HAP-1 (cell line): ENCODE measurements at regions of chr1 and their contacts with region 1.

Region 1: GRCh38 chr1:236103646-236104218 is 38.6 kb upstream of the GPR137B start:
- DNase-seq: peak; percentile 66 to 74
- H3K4me3 ChIP-seq: no peak overlapping the region
- H3K4me1 ChIP-seq: no peaks in the 10 kb centered on the region
- H3K27me3 ChIP-seq: no peaks in the 10 kb centered on the region

Region 2: DNA sequence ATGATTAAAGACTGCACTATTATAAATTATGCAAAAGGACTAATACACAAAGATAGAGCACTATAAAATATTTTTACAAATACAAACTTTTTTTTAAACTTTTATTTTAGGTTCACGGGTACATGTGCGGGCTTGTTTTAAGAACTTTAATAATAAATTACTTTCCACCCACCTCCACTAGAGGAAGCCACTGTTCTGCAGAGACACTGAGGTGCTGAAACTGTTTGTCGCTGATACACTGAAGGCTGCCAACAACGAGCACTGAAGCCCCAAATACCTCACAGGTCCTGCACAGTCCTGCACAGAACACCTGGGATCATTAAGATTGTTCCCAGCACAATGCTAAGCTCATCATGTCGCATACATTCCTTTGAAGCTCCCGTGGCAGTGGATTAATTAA is 1710.5 kb before region 1 on chr1:
- in situ Hi-C with region 1: no loop called
- DNase-seq: no peak
- H3K4me3 ChIP-seq: no peak overlapping the region
- H3K4me1 ChIP-seq: no peaks in the 10 kb centered on the region
- H3K27me3 ChIP-seq: no peaks in the 10 kb centered on the region

Region 3: GRCh38 chr1:236039740-236040685 is 63.7 kb before region 1 on chr1:
- in situ Hi-C with region 1: no loop called
- DNase-seq: no peak
- H3K4me3 ChIP-seq: no peak overlapping the region
- H3K4me1 ChIP-seq: no peaks in the 10 kb centered on the region
- H3K27me3 ChIP-seq: no peaks in the 10 kb centered on the region

Region 4: GRCh38 chr1:236534151-236534651 is 430.5 kb after region 1 on chr1:
- in situ Hi-C with region 1: loop called (anchors 10 kb)
- DNase-seq: no peak
- H3K4me3 ChIP-seq: no peak overlapping the region
- H3K4me1 ChIP-seq: no peaks in the 10 kb centered on the region
- H3K27me3 ChIP-seq: no peaks in the 10 kb centered on the region

Region 5: DNA sequence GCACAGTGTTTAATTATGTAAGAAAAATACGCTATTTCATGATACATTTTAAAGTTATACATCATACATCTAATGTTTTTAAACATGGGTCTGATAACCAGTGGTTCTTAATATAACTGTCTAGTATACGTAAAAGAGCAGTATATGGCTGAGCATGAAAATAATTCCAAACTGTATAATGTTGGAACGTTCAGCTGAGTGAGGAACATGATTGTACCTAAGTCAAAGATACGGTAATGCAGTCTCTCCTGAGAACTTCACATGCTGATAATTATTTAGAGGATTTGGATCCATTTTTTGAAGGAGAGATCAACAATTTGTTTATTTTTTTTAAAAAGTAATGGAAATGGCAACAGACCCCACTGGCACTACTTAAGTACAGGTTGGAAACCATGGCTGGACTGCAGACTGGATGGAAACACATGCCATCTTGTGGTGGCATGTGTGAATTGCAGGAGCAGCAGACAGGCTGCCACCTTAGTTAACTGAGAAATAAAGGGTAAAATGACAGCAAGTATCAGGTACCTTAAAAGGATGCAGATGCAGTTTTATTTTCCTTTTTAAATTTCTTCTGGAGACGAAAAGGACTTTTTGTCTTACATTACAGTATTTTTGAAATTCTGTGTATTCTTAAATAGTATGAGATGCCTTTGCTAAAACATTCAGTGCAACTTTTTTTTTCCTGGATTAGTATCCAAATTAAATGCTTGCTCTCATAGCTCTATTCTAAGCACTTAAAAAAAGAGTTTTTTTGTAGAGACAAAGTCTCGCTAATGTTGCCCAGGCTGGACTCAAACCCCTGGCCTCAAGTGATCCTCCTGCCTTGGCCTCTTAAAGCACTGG is 765.1 kb after region 1 on chr1:
- in situ Hi-C with region 1: loop called (anchors 25 kb)
- DNase-seq: peak; percentile 28 to 49
- H3K4me3 ChIP-seq: no peak overlapping the region
- H3K4me1 ChIP-seq: no peaks in the 10 kb centered on the region; the same call in 1 of the 2 replicates
- H3K27me3 ChIP-seq: no peaks in the 10 kb centered on the region